Pancreas (tissue), 10 donors: ENCODE measurements at regions of chr15 and their contacts with region 1.

Region 1: DNA sequence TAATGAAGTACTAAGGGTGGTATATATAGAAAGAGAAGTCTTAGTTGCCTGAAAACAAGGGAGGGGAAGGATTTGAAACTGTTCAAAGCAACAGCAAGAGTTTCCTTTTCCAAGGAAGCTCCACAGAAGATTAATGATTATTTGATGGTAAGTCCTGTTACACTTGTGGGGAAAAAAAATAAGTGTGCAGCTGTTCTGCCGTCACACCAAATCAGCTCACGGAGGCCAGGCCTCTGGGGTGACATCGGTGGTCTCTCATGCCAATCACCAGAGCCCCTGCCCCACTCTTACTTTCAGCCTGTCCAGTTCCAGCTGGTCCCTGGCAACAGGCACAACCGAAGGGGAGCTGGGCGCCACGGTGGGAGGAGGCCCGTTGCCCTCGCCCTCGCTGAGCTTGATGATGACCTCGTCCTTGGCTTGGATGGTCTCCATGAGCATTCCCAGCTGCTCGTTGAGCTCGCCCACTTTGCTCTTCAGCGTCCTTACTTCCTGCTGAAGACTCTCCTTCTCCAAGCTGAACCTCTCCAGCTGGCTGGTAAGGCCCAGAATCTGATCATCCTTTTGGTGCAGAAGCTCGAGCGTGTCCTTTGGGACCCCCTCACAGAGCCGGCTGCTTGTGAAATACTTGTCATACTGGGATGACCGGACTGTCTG is 53.5 kb downstream of the TBC1D2B start:
- DNase-seq: peak in 2 of 6 donors; percentile 26 to 50
- ATAC-seq: peak; percentile 39 to 70 (median 62)
- H3K4me3 ChIP-seq: no peak overlapping the region
- H3K27ac ChIP-seq: peak overlapping the region in 2 of 4 donors; percentile 12 to 38
- H3K4me1 ChIP-seq: peaks cover 3 to 5% (median 4%) of the 10 kb centered on the region in 3 donors
- H3K27me3 ChIP-seq: no peaks in the 10 kb centered on the region
- CTCF ChIP-seq: no peak

Region 2: DNA sequence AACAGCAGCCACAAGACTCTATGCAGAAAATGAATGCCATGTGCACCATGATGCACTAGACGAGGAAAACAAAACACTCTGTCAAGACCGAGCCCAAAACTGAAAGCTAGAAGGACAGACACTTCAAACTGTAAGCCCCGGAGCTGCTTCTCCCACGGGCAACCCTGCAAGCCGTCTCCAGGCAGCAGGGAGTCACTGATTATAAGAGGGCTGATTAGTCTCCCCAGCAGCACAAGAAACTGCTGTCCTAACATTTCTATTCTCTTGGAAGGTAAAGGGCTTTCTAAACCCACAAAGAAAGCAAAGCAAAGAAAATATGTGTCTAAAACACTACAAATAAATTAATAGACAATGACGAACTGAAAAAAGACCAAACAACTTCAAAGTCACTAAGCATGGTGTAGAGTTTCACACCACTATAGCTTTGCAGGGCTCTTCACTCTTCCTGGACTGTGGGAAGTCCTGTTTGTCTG is 38.0 kb after region 1 on chr15:
- intact Hi-C with region 1: no loop called
- DNase-seq: no peak
- ATAC-seq: peak in 3 of 4 donors; percentile 18 to 27 (median 22)
- H3K4me3 ChIP-seq: no peak overlapping the region
- H3K27ac ChIP-seq: peak overlapping the region in 1 of 4 donors; percentile 13
- H3K4me1 ChIP-seq: peaks cover 37 to 69% (median 57%) of the 10 kb centered on the region in 3 donors
- H3K27me3 ChIP-seq: no peaks in the 10 kb centered on the region
- CTCF ChIP-seq: no peak

Region 3: GRCh38 chr15:78077058-78077877 is 53.3 kb after region 1 on chr15 and contains the start of gene TBC1D2B:
- intact Hi-C with region 1: loop called in 1 of 3 experiments (anchors 10 kb)
- DNase-seq: peak; percentile 61 to 88 (median 74)
- ATAC-seq: peak; percentile 70 to 77 (median 76)
- H3K4me3 ChIP-seq: peak within 1 kb of the TSS; percentile 72 to 89 (median 81)
- H3K27ac ChIP-seq: peak within 1 kb of the TSS; percentile 84 to 91 (median 88)
- H3K4me1 ChIP-seq: peaks cover 0 to 19% (median 13%) of the 10 kb centered on the region in 3 donors
- H3K27me3 ChIP-seq: no peaks in the 10 kb centered on the region
- CTCF ChIP-seq: no peak
- total RNA-seq, gene TBC1D2B: 16.1 to 35.8 (median 27.0) TPM